ENCODE measurements at regions of chr4 and their contacts with region 1.

Region 1: DNA sequence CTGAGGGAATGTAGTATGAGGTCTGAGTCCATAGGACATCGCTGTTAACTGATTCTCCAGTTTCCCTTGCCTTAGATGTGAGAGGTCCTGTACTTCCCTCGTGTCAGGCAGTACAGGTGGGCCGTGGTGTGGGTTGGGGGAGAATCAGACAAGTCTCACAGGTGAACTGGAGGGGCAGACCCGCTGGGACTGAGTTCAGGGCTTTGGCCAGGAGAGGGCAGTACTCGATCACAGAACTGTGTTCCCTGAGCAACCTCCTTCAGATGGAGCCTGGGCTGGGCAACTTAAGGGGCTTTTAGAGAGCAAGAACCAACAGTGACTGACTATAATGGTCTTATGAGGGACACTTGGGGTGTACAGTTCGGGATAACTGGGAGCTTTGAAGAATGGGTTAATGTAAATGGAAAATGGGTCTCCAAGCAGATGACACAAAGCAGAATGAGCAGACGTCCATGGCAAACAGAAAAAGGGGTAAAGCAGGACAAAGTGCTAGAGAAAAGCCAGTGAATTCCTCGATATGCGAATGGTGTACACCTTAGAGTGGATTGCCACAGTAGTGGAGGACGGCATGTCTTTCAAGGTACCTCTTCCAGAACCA is 83.6 kb downstream of the CCNG2 start:
- DNase-seq: peak; percentile 74
- H3K4me3 Mint-ChIP-seq: no peak overlapping the region
- H3K27ac Mint-ChIP-seq: no peak overlapping the region
- H3K4me1 Mint-ChIP-seq: no peaks in the 10 kb centered on the region
- H3K27me3 Mint-ChIP-seq: peaks cover 10% of the 10 kb centered on the region

Region 2: DNA sequence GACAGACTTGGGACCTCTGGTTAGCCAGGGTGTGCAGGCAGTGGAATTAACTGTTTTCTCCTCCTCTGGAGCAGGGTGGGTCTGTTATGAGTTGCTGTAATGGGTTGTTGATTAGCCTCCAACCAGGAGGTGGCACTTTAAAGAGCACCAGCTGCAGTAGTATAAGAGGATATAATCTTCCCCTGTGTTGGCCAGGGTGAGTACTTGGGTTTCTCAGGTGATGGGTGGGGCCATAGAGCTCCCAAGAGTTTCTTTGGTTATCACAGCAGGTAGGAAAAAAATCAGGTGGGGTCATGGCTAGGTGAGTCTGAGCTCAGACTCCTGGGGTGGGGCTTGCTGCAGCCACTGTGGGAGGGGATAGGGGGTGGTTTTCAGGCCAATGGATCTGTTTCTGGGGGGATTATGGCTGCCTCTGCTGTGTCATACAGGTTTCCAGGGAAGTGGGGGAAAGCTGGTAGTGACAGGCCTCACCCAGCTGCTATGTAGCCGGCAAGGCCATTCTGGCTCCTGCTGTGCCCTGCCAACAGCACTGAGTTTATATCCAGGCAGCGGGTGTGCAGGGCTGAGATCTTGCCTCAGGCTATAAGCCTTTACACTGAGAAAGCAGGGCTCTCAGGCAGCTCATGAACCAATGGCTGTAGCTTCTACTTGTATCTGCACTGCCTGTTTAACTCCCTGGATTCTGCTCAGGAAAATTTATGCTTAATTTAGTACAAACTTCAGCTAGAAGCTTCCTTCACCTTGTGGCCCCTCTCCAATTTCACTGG is 13.4 kb before region 1 on chr4:
- CTCF ChIA-PET with region 1: interaction called, 23 read pairs
- DNase-seq: no peak
- H3K4me3 Mint-ChIP-seq: no peak overlapping the region
- H3K27ac Mint-ChIP-seq: no peak overlapping the region
- H3K4me1 Mint-ChIP-seq: no peaks in the 10 kb centered on the region
- H3K27me3 Mint-ChIP-seq: peaks cover 10% of the 10 kb centered on the region

Region 3: GRCh38 chr4:77263247-77263646 is 22.7 kb after region 1 on chr4:
- CTCF ChIA-PET with region 1: no interaction called
- DNase-seq: no peak
- H3K4me3 Mint-ChIP-seq: no peak overlapping the region
- H3K27ac Mint-ChIP-seq: no peak overlapping the region
- H3K4me1 Mint-ChIP-seq: no peaks in the 10 kb centered on the region
- H3K27me3 Mint-ChIP-seq: no peaks in the 10 kb centered on the region

Region 4: GRCh38 chr4:77358315-77358928 is 117.9 kb after region 1 on chr4:
- CTCF ChIA-PET with region 1: interaction called, 79 read pairs
- DNase-seq: no peak
- H3K4me3 Mint-ChIP-seq: no peak overlapping the region
- H3K27ac Mint-ChIP-seq: no peak overlapping the region
- H3K4me1 Mint-ChIP-seq: no peaks in the 10 kb centered on the region
- H3K27me3 Mint-ChIP-seq: no peaks in the 10 kb centered on the region

Measured in activated naive CD4-positive, alpha-beta T cell treated with anti-CD3 and anti-CD28 coated beads, Interleukin-2, amount 10 ng/mL, durations not matched to agents 7 days and 5 days (primary cell).